Left cardiac atrium (tissue), 4 donors: ENCODE measurements at regions of chr16 and their contacts with region 1.

Region 1: GRCh38 chr16:47141773-47142485 is 1.8 kb downstream of the NETO2 start:
- DNase-seq: peak; percentile 80
- ATAC-seq: peak; percentile 75 to 92

Region 2: DNA sequence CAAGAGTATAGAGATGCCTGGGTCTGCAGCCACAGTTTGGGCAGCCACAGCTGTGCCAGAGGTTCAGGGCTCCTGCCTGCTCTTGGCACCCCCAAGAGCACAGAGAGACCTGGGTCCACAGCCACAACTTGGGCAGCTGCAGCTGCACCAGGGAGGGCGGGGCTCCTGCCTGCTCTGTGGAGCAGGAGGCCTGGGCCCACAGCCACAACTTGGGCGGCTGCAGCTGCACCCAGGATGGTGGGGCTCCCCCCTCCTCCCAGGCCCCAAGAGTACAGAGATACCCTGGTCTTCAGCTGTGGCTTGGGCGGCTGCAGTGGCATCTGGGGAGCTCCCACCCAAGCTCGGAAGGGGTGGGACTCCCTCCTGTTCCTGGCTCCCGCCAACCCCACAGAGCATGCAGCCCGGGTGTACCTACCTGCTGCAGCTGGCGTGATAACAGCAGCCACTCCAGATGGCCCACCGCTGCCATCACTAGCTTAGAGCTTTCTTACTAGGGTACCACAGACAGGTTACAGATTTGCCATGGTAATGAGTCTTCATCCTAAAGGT is 391.9 kb after region 1 on chr16:
- intact Hi-C with region 1: no loop called
- DNase-seq: no peak
- ATAC-seq: no peak

Region 3: GRCh38 chr16:48054881-48055601 is 913.1 kb after region 1 on chr16:
- intact Hi-C with region 1: loop called (anchors 10 kb)
- DNase-seq: peak; percentile 37
- ATAC-seq: peak; percentile 85 to 88